Caco-2 (cell line): ENCODE measurements at regions of chr6 and their contacts with region 1.

Region 1: DNA sequence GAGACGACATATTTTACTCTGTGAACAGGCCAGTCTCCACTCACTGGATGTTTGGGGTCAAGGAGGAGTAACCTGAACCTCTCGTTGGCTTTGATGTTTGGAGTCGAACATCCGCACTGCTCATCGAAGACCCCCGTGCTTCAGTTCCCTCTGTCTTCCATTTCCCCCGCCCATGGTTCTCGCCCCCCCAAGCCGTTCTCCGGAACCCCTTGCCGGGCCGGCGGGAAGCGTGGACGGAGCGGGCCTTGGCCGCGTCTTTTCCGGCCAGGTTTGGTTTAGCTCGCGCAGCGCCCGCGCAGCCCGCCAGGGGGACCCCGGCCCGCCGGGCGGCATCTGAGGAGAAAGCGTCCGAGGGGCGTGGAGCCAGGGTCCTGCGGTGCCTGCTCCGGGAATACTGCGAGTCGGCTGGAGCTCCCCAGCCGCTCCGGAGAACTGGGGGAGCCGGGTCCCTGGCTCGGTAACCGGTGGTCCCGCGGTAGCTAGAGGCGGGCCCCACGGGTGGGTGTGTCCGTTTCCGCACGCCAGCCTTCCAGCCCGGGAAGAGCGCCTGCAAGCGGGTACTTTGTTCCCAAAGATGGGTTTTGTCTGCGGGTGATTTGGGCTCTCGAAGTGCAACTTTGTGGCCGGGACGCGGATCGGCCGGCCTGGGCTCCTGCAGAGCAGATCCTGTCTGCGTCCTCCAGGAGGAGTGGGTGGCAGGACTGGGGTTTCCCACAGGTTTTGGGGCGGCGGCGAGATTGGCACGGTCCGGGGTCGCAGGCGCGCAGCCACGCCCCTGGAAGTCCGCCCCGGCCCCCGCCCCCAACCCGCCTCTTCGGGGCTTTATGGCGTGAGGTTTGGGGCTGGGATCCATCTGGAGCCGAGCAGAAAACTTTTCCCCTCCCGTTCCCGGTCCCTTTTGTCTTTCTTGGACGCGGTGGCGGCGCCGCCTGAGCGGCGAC is at the start of gene TMEM200A:
- DNase-seq: peak; percentile 69 to 88
- H3K4me3 ChIP-seq: peak within 1 kb of the TSS; percentile 71
- H3K4me3 Mint-ChIP-seq: peak within 1 kb of the TSS; percentile 91
- H3K27ac Mint-ChIP-seq: peak within 1 kb of the TSS; percentile 20
- H3K4me1 ChIP-seq: peaks cover 16% of the 10 kb centered on the region
- H3K4me1 Mint-ChIP-seq: peaks cover 36% of the 10 kb centered on the region
- H3K27me3 ChIP-seq: no peaks in the 10 kb centered on the region
- H3K27me3 Mint-ChIP-seq: no peaks in the 10 kb centered on the region
- CTCF ChIP-seq: peak; percentile 76 to 92
- total RNA-seq, gene TMEM200A: 15.6 and 16.3 TPM in 2 replicates

Region 2: DNA sequence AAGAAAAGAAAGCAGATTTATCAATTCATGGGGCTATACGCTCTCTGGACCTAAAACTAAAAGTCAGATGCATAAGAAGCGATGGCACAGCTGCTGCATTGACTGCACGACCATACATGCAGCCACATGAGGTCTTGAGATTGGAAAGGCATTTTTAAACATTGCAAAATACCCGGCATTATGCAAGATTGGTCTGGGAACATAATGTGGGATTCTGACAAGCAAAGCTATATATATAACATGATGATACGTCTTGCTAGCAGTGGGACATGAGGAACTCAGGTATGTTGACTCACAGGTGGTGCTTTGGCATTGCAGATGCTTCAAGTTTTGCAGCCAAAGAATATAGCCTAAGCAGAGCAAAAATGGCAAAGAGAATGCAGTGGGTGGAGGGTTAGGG is 197.8 kb before region 1 on chr6:
- CTCF ChIA-PET with region 1: no interaction called
- POLR2A ChIA-PET with region 1: no interaction called
- intact Hi-C with region 1: no loop called
- DNase-seq: peak in 1 of 2 experiments; percentile 24
- H3K4me3 ChIP-seq: no peak overlapping the region
- H3K4me3 Mint-ChIP-seq: no peak overlapping the region
- H3K27ac Mint-ChIP-seq: no peak overlapping the region
- H3K4me1 ChIP-seq: no peaks in the 10 kb centered on the region
- H3K4me1 Mint-ChIP-seq: no peaks in the 10 kb centered on the region
- H3K27me3 ChIP-seq: no peaks in the 10 kb centered on the region
- H3K27me3 Mint-ChIP-seq: peaks cover 4% of the 10 kb centered on the region
- CTCF ChIP-seq: no peak

Region 3: DNA sequence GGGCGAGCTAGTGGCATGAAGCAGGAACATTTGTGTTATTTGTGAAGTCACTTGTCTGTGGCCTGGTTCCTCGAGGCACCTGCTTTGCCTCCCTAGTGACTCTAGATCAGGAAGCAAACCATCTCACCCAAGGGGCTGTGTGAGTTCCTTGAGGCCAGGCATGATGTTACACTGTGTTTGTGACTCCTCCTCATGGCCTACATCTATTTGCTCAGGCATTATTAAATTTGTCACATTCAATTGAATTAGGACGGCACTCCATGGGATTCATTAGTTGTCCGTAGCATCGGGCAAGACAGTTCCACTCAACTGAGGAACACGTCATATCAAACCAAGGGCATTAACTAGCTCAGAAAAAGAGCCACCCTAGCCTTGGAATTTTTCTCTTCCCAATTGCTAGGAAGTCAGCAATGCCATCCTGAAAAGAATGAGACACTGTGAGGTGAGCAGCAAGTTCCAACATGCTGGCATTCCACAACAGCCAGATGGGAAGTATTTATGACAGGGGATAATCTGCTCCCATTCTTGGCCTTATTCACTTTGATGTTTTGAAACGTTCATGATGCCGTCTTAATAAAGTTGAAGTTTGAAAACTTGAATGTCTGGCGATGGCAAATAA is 17.5 kb after region 1 on chr6:
- CTCF ChIA-PET with region 1: interaction called, 7 read pairs
- POLR2A ChIA-PET with region 1: no interaction called
- intact Hi-C with region 1: loop called (anchors 1 kb)
- DNase-seq: peak; percentile 52 to 68
- H3K4me3 ChIP-seq: no peak overlapping the region
- H3K4me3 Mint-ChIP-seq: no peak overlapping the region
- H3K27ac Mint-ChIP-seq: peak overlapping the region; percentile 34
- H3K4me1 ChIP-seq: peaks cover 16% of the 10 kb centered on the region; the same call in 1 of the 2 replicates
- H3K4me1 Mint-ChIP-seq: peaks cover 7% of the 10 kb centered on the region
- H3K27me3 ChIP-seq: no peaks in the 10 kb centered on the region; the same call in 1 of the 2 replicates
- H3K27me3 Mint-ChIP-seq: no peaks in the 10 kb centered on the region
- CTCF ChIP-seq: no peak

Region 4: GRCh38 chr6:130587778-130588520 is 222.5 kb after region 1 on chr6:
- CTCF ChIA-PET with region 1: no interaction called
- POLR2A ChIA-PET with region 1: no interaction called
- intact Hi-C with region 1: loop called (anchors 10 kb)
- DNase-seq: no peak
- H3K4me3 ChIP-seq: no peak overlapping the region
- H3K4me3 Mint-ChIP-seq: no peak overlapping the region
- H3K27ac Mint-ChIP-seq: no peak overlapping the region
- H3K4me1 ChIP-seq: no peaks in the 10 kb centered on the region
- H3K4me1 Mint-ChIP-seq: no peaks in the 10 kb centered on the region
- H3K27me3 ChIP-seq: no peaks in the 10 kb centered on the region
- H3K27me3 Mint-ChIP-seq: peaks cover 12% of the 10 kb centered on the region
- CTCF ChIP-seq: no peak

Region 5: GRCh38 chr6:130697995-130698535 is 332.6 kb after region 1 on chr6:
- CTCF ChIA-PET with region 1: interaction called, 6 read pairs
- POLR2A ChIA-PET with region 1: no interaction called
- intact Hi-C with region 1: loop called (anchors 1 kb)
- DNase-seq: peak; percentile 41 to 59
- H3K4me3 ChIP-seq: no peak overlapping the region
- H3K4me3 Mint-ChIP-seq: no peak overlapping the region
- H3K27ac Mint-ChIP-seq: no peak overlapping the region
- H3K4me1 ChIP-seq: no peaks in the 10 kb centered on the region
- H3K4me1 Mint-ChIP-seq: no peaks in the 10 kb centered on the region
- H3K27me3 ChIP-seq: no peaks in the 10 kb centered on the region; the same call in 1 of the 2 replicates
- H3K27me3 Mint-ChIP-seq: peaks cover 8% of the 10 kb centered on the region
- CTCF ChIP-seq: peak; percentile 77 to 83